CD8-positive, alpha-beta T cell (primary cell): ENCODE measurements at regions of chr14 and their contacts with region 1.

Region 1: DNA sequence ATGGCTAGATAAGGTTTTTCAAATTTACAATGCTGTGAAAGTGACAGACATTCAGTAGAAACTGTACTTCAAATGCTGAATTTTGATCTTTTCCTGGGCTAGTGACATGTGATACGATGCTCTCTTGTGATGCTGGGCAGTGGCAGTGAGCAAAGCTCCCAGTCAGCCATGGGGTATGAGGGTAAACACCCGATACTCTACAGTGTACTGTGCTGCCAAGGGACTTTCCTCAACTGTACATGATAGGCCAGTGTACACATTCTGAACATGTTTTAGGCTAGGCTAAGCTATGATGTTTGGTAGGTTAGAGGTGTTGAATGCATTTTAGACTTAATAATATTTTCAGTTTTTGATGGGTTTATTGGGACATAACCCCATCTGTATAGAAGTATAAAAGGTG is 17.6 kb downstream of the MBIP start:
- DNase-seq: no peak
- ATAC-seq: no peak
- H3K4me3 ChIP-seq: no peak overlapping the region
- H3K4me3 Mint-ChIP-seq: no peak overlapping the region
- H3K27ac ChIP-seq: no peak overlapping the region
- H3K27ac Mint-ChIP-seq: peak overlapping the region; percentile 2
- H3K4me1 ChIP-seq: no peaks in the 10 kb centered on the region
- H3K4me1 Mint-ChIP-seq: no peaks in the 10 kb centered on the region
- H3K27me3 ChIP-seq: no peaks in the 10 kb centered on the region
- H3K27me3 Mint-ChIP-seq: no peaks in the 10 kb centered on the region
- CTCF ChIP-seq: no peak

Region 2: GRCh38 chr14:36238666-36239363 is 64.0 kb before region 1 on chr14:
- CTCF ChIA-PET with region 1: no interaction called
- POLR2A ChIA-PET with region 1: no interaction called
- intact Hi-C with region 1: loop called in 1 of 2 experiments (anchors 2 kb)
- DNase-seq: no peak
- ATAC-seq: no peak
- H3K4me3 ChIP-seq: no peak overlapping the region
- H3K4me3 Mint-ChIP-seq: no peak overlapping the region
- H3K27ac ChIP-seq: no peak overlapping the region
- H3K27ac Mint-ChIP-seq: no peak overlapping the region
- H3K4me1 ChIP-seq: no peaks in the 10 kb centered on the region
- H3K4me1 Mint-ChIP-seq: no peaks in the 10 kb centered on the region
- H3K27me3 ChIP-seq: no peaks in the 10 kb centered on the region
- H3K27me3 Mint-ChIP-seq: peaks cover 24% of the 10 kb centered on the region
- CTCF ChIP-seq: no peak